AG04449 (cell line): ENCODE measurements at regions of chr20 and their contacts with region 1.

Region 1: GRCh38 chr20:45465491-45466266 is 3.9 kb upstream of the WFDC2 start:
- DNase-seq: no peak
- H3K4me3 ChIP-seq: no peak overlapping the region
- CTCF ChIP-seq: no peak

Region 2: GRCh38 chr20:45450097-45450818 is 15.4 kb before region 1 on chr20:
- CTCF ChIA-PET with region 1: interaction called, 23 read pairs
- POLR2A ChIA-PET with region 1: no interaction called
- DNase-seq: no peak
- H3K4me3 ChIP-seq: no peak overlapping the region
- CTCF ChIP-seq: peak; percentile 49